Naive thymus-derived CD4-positive, alpha-beta T cell (primary cell): ENCODE measurements at regions of chr12 and their contacts with region 1.

Region 1: DNA sequence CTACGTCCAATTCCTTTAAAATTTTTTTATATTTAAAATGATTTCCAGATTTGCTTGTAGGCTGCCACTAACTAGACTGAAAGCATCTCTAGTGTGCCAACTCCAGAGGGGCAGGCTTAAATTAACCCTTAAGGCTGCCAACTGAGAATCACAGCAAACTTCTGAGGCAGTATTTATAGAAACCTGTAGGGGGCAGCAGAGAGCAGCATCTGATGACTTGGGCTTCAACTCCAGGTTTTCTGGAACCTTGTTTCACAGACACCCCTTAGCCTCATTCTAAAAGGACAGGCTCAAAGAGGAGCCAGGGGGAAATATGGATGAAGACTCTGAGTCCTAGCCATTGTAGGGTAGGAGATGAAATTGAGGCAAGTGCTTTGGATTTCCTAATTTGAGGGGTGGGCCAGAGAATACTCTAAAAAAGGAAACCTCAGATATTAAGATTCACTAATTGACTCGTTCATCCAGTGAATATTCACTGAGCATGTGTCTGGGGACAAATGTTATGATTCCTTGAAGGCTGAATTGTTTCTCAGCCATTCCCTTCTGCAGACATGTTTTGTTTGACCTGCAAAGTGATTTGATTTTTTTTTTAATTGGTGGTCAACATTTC is 63.3 kb upstream of the HSPB8 start:
- DNase-seq: peak in 3 of 9 donors; percentile 8 to 20 (median 11)
- ATAC-seq: no peak
- H3K4me3 ChIP-seq: no peak overlapping the region
- H3K4me3 Mint-ChIP-seq: no peak overlapping the region
- H3K27ac ChIP-seq: no peak overlapping the region
- H3K27ac Mint-ChIP-seq: no peak overlapping the region
- H3K4me1 ChIP-seq: no peaks in the 10 kb centered on the region
- H3K4me1 Mint-ChIP-seq: no peaks in the 10 kb centered on the region
- H3K27me3 ChIP-seq: no peaks in the 10 kb centered on the region
- H3K27me3 Mint-ChIP-seq: peaks cover 0 to 24% (median 5%) of the 10 kb centered on the region in 5 donors

Region 2: DNA sequence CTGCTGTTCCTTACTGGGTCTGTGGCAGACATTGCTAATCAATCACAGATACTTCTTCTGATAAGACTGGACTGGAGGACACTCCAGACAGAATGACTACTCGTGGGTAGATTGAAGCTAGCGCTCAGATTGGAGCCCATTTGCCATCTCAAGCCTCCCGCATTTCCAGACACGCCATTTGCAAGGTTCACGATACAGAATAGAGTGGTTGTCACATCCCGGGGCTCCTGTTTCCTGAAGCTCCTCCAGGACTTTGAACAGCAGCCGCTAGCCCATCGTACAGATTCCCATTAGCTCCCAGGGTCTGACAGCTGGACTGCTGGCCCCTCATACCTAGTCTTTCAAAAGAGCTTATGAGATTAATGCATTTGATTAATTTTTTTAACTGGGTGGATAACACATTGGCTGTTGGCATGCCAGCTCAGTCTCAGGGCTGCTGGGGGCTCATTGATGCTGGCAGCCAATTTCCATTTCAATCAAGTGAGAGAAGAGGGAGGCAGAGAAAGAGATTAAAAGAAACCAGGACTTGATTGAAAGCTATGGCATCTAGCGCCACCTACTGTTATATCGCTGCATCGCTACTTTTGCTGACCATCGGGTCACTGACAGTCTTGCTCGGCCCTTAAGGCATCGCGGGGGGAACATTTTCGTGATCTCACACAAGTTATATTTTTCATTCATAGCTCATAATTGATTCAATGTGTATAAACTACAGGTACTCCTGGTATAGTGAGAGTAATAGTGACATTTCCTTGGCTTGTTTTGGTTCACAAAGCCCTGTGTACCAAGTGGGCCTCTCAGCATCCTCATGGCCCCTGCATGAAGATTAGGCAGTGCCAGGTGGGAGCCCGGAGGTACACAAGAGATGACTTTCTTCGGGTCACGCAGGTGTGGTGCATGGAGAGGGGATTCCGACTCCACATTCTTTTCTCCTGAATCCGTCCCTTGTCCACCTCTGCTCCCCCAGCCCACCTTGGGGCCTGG is 297.7 kb after region 1 on chr12:
- CTCF ChIA-PET with region 1: no interaction called
- POLR2A ChIA-PET with region 1: no interaction called
- intact Hi-C with region 1: loop called in 1 of 2 experiments (anchors 1 kb)
- DNase-seq: peak in 1 of 9 donors; percentile 29
- ATAC-seq: no peak
- H3K4me3 ChIP-seq: no peak overlapping the region
- H3K4me3 Mint-ChIP-seq: no peak overlapping the region
- H3K27ac ChIP-seq: no peak overlapping the region
- H3K27ac Mint-ChIP-seq: no peak overlapping the region
- H3K4me1 ChIP-seq: no peaks in the 10 kb centered on the region
- H3K4me1 Mint-ChIP-seq: no peaks in the 10 kb centered on the region
- H3K27me3 ChIP-seq: no peaks in the 10 kb centered on the region
- H3K27me3 Mint-ChIP-seq: peaks cover 7 to 53% (median 43%) of the 10 kb centered on the region in 5 donors